ENCODE measurements at regions of chr6 and their contacts with region 1.

Region 1: GRCh38 chr6:44630125-44631028 is 242.9 kb downstream of the CDC5L start:
- DNase-seq: peak; percentile 48
- ATAC-seq: peak; percentile 57

Region 2: DNA sequence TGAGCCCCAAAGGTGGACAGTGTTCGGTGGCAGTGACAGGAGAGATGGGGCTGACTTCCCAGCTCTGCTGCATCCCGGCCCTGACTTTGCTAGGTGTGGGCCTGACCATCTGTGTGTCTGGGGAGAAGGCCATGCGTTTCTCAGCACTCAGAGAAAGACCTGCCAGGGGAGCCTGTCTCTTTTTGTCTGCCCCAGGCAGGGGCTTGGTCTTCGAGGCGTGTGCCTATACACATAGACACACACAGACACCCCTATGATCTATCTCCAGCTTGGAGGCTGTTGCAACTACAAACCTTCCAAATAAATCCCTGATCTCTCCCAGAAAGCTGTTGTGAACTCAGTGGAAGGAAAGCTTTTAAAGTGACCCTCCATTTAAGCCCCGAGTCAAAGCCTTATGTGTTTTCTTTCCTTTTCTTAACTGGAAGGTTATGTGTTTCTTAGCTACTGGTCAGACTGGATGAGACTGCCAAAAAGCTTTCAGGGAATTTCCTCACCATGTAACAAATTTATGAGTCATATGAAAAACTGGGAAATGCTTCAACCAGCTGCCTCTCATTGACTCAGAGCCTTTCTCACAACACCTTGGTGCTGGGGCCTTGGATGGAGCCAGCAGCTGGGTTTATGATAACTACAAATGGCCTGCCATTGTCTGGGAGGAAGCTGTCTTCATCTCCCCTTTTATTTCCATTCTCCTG is 140.3 kb before region 1 on chr6:
- intact Hi-C with region 1: loop called (anchors 10 kb)
- DNase-seq: no peak
- ATAC-seq: peak; percentile 91

Region 3: GRCh38 chr6:44569931-44570385 is 60.4 kb before region 1 on chr6:
- intact Hi-C with region 1: no loop called
- DNase-seq: peak; percentile 72
- ATAC-seq: peak; percentile 83

Measured in Right ventricle myocardium superior (tissue), 1 donor.